CD8-positive, alpha-beta T cell (primary cell): ENCODE measurements at regions of chr19 and their contacts with region 1.

Region 1: DNA sequence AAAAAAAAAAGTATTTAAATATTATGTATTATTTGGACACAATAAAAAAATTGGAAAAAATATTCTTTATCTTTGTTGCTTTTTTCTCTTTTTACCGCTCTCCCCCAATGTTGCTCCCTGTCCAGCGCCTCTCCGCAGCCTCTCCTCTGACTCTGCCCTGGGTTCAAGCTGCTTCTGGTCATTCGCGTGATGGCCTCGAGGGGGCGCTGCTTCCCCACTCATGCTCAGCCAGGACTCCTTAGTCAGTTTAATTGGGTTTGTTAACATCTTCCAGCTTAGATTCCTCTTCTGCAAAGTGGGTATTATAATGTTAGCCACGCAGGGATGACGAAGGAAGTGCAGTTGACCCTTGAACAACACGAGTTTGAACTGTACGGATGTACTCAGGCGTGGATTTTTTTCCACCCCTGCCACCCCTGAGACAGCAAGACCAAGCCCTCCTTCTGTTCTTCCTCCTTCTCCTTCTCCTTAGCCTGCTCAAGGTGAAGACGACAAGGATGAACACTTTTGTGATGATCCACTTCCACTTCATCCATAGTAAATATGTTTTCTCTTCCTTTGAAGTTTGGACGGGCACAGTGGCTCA is 4.9 kb upstream of the NWD1 start:
- DNase-seq: peak in 7 of 9 experiments; percentile 7 to 58 (median 40)
- ATAC-seq: peak; percentile 40
- H3K4me3 ChIP-seq: no peak overlapping the region
- H3K4me3 Mint-ChIP-seq: no peak overlapping the region
- H3K27ac ChIP-seq: no peak overlapping the region
- H3K27ac Mint-ChIP-seq: no peak overlapping the region
- H3K4me1 ChIP-seq: no peaks in the 10 kb centered on the region
- H3K4me1 Mint-ChIP-seq: no peaks in the 10 kb centered on the region
- H3K27me3 ChIP-seq: peaks cover 0 to 5% of the 10 kb centered on the region in 2 experiments
- H3K27me3 Mint-ChIP-seq: peaks cover 7% of the 10 kb centered on the region
- CTCF ChIP-seq: peak; percentile 61

Region 2: GRCh38 chr19:16417660-16418596 is 296.9 kb before region 1 on chr19:
- CTCF ChIA-PET with region 1: no interaction called
- POLR2A ChIA-PET with region 1: no interaction called
- intact Hi-C with region 1: no loop called
- DNase-seq: peak; percentile 54 to 84 (median 70)
- ATAC-seq: peak; percentile 99
- H3K4me3 ChIP-seq: no peak overlapping the region
- H3K4me3 Mint-ChIP-seq: no peak overlapping the region
- H3K27ac ChIP-seq: no peak overlapping the region
- H3K27ac Mint-ChIP-seq: peak overlapping the region; percentile 32
- H3K4me1 ChIP-seq: peaks cover 6% of the 10 kb centered on the region
- H3K4me1 Mint-ChIP-seq: peaks cover 9% of the 10 kb centered on the region
- H3K27me3 ChIP-seq: no peaks in the 10 kb centered on the region
- H3K27me3 Mint-ChIP-seq: no peaks in the 10 kb centered on the region
- CTCF ChIP-seq: peak; percentile 74

Region 3: GRCh38 chr19:17370026-17370587 is 655.3 kb after region 1 on chr19:
- CTCF ChIA-PET with region 1: no interaction called
- POLR2A ChIA-PET with region 1: no interaction called
- intact Hi-C with region 1: loop called in 1 of 2 experiments (anchors 10 kb)
- DNase-seq: peak in 1 of 9 experiments; percentile 30
- ATAC-seq: no peak
- H3K4me3 ChIP-seq: no peak overlapping the region
- H3K4me3 Mint-ChIP-seq: no peak overlapping the region
- H3K27ac ChIP-seq: no peak overlapping the region
- H3K27ac Mint-ChIP-seq: no peak overlapping the region
- H3K4me1 ChIP-seq: no peaks in the 10 kb centered on the region
- H3K4me1 Mint-ChIP-seq: peaks cover 5% of the 10 kb centered on the region
- H3K27me3 ChIP-seq: peaks cover 0 to 2% of the 10 kb centered on the region in 2 experiments
- H3K27me3 Mint-ChIP-seq: peaks cover 10% of the 10 kb centered on the region
- CTCF ChIP-seq: no peak